ENCODE measurements at regions of chr15 and their contacts with region 1.

Region 1: GRCh38 chr15:78644979-78645378 is 4.0 kb upstream of the CHRNB4 start:
- DNase-seq: no peak
- ATAC-seq: no peak
- H3K4me3 ChIP-seq: no peak overlapping the region
- H3K4me1 ChIP-seq: peaks cover 5% of the 10 kb centered on the region
- CTCF ChIP-seq: no peak

Region 2: DNA sequence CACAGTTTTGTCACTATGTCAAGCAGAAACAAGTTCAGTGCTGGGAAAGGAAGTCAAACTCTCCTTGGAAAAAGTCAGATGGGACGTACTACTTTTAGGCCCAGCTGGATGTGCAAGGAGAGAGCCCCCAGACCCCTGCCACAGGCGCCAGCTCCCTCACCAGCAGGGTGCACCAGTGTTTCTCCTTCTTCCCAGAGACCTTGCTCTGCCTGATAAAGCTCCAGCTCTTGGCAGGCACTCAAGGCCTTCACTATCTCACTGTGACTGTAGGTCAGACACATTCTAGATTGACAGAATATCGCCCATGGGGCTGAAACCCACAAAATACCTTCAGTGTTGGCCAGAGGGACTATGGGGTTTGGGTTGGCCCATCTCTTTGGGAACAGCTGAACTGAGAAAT is 50.9 kb after region 1 on chr15:
- intact Hi-C with region 1: loop called in 1 of 2 experiments (anchors 2 kb)
- DNase-seq: no peak
- ATAC-seq: no peak
- H3K4me3 ChIP-seq: no peak overlapping the region
- H3K4me1 ChIP-seq: no peaks in the 10 kb centered on the region
- CTCF ChIP-seq: no peak